ENCODE measurements at regions of chr1 and their contacts with region 1.

Region 1: GRCh38 chr1:186102557-186103148 is 272.4 kb downstream of the TPR start:
- DNase-seq: peak; percentile 75
- H3K4me3 Mint-ChIP-seq: no peak overlapping the region
- H3K27ac Mint-ChIP-seq: no peak overlapping the region
- H3K4me1 Mint-ChIP-seq: peaks cover 6% of the 10 kb centered on the region
- H3K27me3 Mint-ChIP-seq: no peaks in the 10 kb centered on the region
- CTCF ChIP-seq: no peak

Region 2: GRCh38 chr1:185917646-185918045 is 185.0 kb before region 1 on chr1:
- CTCF ChIA-PET with region 1: no interaction called
- POLR2A ChIA-PET with region 1: no interaction called
- intact Hi-C with region 1: loop called (anchors 2 kb)
- DNase-seq: peak; percentile 71
- H3K4me3 Mint-ChIP-seq: no peak overlapping the region
- H3K27ac Mint-ChIP-seq: no peak overlapping the region
- H3K4me1 Mint-ChIP-seq: no peaks in the 10 kb centered on the region
- H3K27me3 Mint-ChIP-seq: no peaks in the 10 kb centered on the region
- CTCF ChIP-seq: no peak

Measured in MCF 10A (cell line).